H1 (cell line): ENCODE measurements at regions of chr19 and their contacts with region 1.

Region 1: GRCh38 chr19:2475702-2476450 is at the start of gene GADD45B:
- DNase-seq: peak; percentile 90 to 97
- H3K4me3 ChIP-seq: peak within 1 kb of the TSS; percentile 56 to 81 (median 76)
- H3K27ac ChIP-seq: no peak within 1 kb of the TSS
- H3K4me1 ChIP-seq: peaks cover 0 to 14% (median 13%) of the 10 kb centered on the region in 4 experiments; a peak in 6 of 7 replicates
- H3K27me3 ChIP-seq: peaks cover 10 to 40% (median 34%) of the 10 kb centered on the region in 4 experiments
- CTCF ChIP-seq: no peak
- EP300 ChIP-seq: no peak
- POLR2A ChIP-seq: peak; percentile 100
- RAD21 ChIP-seq: no peak
- total RNA-seq, gene GADD45B: 11.0 and 11.4 TPM in 2 replicates

Region 2: GRCh38 chr19:2494444-2495129 is 18.7 kb after region 1 on chr19:
- CTCF ChIA-PET with region 1: interaction called, 6 read pairs
- POLR2A ChIA-PET with region 1: interaction called, 216 read pairs
- DNase-seq: no peak
- H3K4me3 ChIP-seq: peak overlapping the region; percentile 35 to 64 (median 47)
- H3K27ac ChIP-seq: no peak overlapping the region
- H3K4me1 ChIP-seq: peaks cover 3 to 21% (median 13%) of the 10 kb centered on the region in 4 experiments
- H3K27me3 ChIP-seq: peaks cover 4 to 40% (median 25%) of the 10 kb centered on the region in 4 experiments
- CTCF ChIP-seq: no peak
- EP300 ChIP-seq: no peak
- POLR2A ChIP-seq: no peak
- RAD21 ChIP-seq: no peak

Region 3: GRCh38 chr19:2524838-2525723 is 49.2 kb after region 1 on chr19:
- CTCF ChIA-PET with region 1: interaction called, 4 read pairs
- POLR2A ChIA-PET with region 1: interaction called, 37 read pairs
- DNase-seq: no peak
- H3K4me3 ChIP-seq: no peak overlapping the region
- H3K27ac ChIP-seq: peak overlapping the region; percentile 37; the same call in 1 of the 2 replicates
- H3K4me1 ChIP-seq: peaks cover 0 to 13% (median 5%) of the 10 kb centered on the region in 4 experiments; a peak in 4 of 7 replicates
- H3K27me3 ChIP-seq: no peaks in the 10 kb centered on the region
- CTCF ChIP-seq: no peak
- EP300 ChIP-seq: no peak
- POLR2A ChIP-seq: no peak
- RAD21 ChIP-seq: no peak

Region 4: DNA sequence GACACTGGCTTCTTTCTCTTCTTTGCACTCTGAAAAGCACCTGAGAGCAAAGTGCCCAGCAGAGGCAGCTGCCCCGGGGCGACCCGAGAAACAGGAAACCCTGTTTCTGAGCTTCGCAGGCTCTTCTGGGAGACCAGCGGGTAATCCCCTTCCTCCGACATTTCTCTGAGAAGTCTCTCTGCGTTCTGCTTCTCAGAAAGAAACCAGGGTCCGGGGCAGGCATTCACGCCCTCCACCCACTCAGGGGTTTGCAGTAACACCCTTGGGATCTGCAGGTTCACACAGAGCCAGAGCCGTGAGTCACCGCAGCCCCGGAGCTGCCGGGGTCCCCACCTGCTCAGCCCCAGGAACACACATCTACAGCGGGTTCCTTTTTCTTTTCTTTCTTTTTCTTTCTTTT is 86.0 kb after region 1 on chr19:
- CTCF ChIA-PET with region 1: no interaction called
- POLR2A ChIA-PET with region 1: interaction called, 18 read pairs
- DNase-seq: no peak
- H3K4me3 ChIP-seq: no peak overlapping the region
- H3K27ac ChIP-seq: no peak overlapping the region
- H3K4me1 ChIP-seq: peaks cover 0 to 4% (median under 1%) of the 10 kb centered on the region in 4 experiments; a peak in 1 of 7 replicates
- H3K27me3 ChIP-seq: no peaks in the 10 kb centered on the region
- CTCF ChIP-seq: no peak
- EP300 ChIP-seq: no peak
- POLR2A ChIP-seq: no peak
- RAD21 ChIP-seq: no peak

Region 5: DNA sequence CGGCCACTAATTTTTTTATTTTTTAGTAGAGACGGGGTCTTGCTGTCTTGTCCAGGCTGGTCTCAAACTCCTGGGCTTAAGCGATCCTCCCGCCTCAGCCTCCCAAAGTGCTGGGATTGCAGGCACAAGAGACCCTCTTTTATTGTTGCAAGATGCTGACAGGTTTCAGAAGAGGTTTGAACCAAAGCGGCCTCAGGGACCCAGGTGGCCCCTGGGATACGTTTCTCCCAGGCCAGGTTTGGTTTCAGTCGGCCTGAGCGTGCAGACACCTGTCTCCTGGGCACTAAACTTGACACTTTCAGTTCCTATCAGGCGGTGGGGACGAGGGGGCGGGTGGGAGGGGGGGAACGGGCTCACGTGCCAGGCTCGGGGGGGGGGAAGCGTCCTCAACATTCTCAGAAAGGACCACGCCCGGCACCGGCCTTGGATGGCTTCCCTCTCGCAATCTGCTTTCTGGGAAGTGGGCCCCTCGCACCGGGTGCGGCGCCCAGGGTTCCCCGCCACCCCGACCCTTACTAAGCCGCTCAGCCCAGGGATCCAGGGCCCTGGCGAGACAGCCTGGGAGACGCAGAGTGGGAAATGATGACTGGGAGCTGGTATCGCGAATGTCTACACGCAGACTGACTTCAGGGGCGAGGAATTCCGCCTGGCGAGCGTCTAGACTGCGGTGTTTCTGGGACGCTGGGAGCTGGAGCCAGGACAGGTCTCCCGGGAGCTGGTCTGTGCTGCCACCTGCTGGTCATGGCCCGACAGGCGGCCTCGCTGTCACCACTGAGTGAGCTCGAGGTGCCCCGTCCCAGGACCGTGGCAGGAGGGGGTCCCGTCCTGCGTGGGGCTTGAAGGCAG is 135.0 kb after region 1 on chr19:
- CTCF ChIA-PET with region 1: interaction called, 133 read pairs
- POLR2A ChIA-PET with region 1: interaction called, 135 read pairs
- DNase-seq: peak; percentile 80 to 98
- H3K4me3 ChIP-seq: peak overlapping the region in 3 of 4 experiments; percentile 32 to 55 (median 37); a peak in 6 of 8 replicates
- H3K27ac ChIP-seq: no peak overlapping the region
- H3K4me1 ChIP-seq: peaks cover 0 to 5% (median under 1%) of the 10 kb centered on the region in 4 experiments; a peak in 2 of 7 replicates
- H3K27me3 ChIP-seq: peaks cover 0 to 9% (median 2%) of the 10 kb centered on the region in 4 experiments; a peak in 1 of 7 replicates
- CTCF ChIP-seq: peak; percentile 90 to 98 (median 96)
- EP300 ChIP-seq: 0 out of 3 replicates have a peak, but pooled peaks of 1 of the 2 experiments have one; percentile 10
- POLR2A ChIP-seq: no peak
- RAD21 ChIP-seq: peak; percentile 98 to 99